ENCODE measurements at regions of chr2 and their contacts with region 1.

Region 1: DNA sequence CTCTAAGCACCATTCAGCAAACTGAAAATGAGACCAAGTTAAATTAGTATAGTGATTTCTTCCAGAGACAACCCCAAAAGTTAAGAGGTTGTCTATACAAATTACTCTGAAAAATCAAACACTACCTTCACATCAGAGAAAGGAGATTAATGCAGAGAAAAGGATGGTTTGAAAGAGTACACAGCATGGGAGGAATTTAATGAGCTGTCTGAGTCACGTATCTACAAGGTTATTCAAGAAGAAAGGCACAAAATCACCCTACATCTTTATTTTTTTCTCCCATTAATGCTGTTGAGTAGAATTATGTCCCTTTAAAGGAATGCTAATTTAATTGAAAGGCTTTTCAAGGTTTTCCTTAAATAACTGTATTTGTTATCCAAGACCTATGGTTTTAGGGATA is 41.1 kb downstream of the LANCL1 start:
- DNase-seq: no peak
- ATAC-seq: no peak

Region 2: DNA sequence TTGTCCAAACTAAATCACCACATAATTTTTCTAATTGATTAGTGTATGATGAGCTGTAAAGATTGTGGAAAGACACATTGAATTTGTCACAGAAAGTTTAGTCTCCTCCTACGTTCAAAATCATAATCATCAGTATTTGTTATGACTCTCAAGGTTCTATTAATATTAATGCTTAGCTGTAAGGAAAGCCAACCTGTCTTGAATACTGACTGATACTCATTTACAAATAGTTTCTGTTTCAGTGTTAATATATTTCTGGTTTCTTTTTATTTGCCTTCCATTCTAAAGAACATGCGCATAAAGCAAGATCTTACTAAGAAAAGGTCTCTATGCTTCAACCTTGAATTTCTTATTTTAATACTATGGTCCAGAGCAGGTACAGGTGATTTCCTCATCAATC is 176.0 kb after region 1 on chr2:
- intact Hi-C with region 1: loop called (anchors 5 kb)
- DNase-seq: no peak
- ATAC-seq: no peak